ENCODE measurements at regions of chr12 and their contacts with region 1.

Region 1: GRCh38 chr12:47742253-47742825 is 16.3 kb downstream of the RAPGEF3 start:
- DNase-seq: peak; percentile 85
- H3K4me3 Mint-ChIP-seq: no peak overlapping the region
- H3K27ac Mint-ChIP-seq: no peak overlapping the region
- H3K4me1 Mint-ChIP-seq: peaks cover 29% of the 10 kb centered on the region
- H3K27me3 Mint-ChIP-seq: no peaks in the 10 kb centered on the region

Region 2: DNA sequence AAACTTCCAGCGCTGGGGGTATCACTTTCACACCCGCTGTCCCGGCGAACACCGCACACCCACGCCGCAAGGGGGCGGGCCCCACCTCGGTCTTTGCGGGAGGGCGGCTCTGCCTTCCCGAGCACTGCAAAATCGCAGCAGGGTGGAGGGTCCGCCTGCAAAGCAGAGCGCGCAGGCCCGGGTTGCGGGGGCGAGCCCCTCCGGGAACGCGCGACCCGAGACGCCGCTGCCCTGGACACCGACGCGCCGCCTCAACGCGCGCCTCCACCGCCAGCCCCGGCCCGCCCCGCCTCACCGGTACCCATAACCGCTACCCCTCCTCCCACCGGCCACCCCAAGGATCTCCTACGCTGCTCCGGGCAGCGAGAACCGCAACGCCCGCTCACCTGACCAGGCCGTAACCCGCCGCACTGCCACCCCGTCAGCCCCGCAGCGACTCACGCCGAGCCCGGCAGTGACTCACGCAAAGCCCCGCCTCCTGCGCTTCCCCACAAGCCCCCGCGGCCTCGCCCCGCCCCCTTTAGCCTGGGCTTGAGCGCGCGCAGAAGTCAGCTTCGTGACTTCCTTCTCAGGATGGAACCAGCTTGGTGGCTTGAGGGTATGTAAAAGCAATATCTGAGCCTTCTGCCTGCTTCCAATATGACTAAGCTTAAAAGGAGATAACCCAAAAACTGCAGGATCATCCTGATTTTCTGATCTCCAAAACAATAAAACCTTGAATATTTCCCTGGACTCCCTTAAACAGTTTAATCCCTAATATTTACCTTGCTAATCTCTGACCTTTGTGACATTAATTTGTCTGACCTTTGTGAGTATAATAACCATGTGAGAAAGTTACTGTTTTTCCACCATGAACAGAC is 36.5 kb before region 1 on chr12 and contains the start of gene RPAP3:
- CTCF ChIA-PET with region 1: interaction called, 19 read pairs
- POLR2A ChIA-PET with region 1: no interaction called
- intact Hi-C with region 1: no loop called
- DNase-seq: peak; percentile 99
- H3K4me3 Mint-ChIP-seq: peak within 1 kb of the TSS; percentile 96
- H3K27ac Mint-ChIP-seq: peak within 1 kb of the TSS; percentile 95
- H3K4me1 Mint-ChIP-seq: peaks cover 50% of the 10 kb centered on the region
- H3K27me3 Mint-ChIP-seq: no peaks in the 10 kb centered on the region
- total RNA-seq, gene RPAP3: 49.4 to 50.2 TPM

Region 3: DNA sequence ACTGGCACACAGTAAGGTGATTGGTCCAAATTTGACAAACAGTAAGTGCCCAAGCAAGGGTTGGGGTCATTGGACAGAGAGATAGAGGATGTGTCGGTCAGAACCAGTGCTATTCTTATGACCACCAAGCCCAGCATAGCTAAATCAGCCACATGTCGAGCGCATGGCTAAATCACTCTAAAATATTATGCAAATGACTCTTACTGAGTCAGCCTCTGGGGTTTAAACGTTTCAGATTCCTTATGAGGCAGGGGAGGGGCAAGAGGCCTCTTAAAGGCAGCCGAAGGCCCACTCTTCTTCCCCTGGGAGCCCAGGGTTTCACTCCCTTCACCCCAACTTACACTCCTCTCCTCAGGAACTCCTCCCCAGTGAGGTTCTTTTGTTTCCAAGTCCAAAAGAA is 16.4 kb before region 1 on chr12:
- CTCF ChIA-PET with region 1: interaction called, 74 read pairs
- POLR2A ChIA-PET with region 1: no interaction called
- intact Hi-C with region 1: no loop called
- DNase-seq: no peak
- H3K4me3 Mint-ChIP-seq: no peak overlapping the region
- H3K27ac Mint-ChIP-seq: no peak overlapping the region
- H3K4me1 Mint-ChIP-seq: peaks cover 7% of the 10 kb centered on the region
- H3K27me3 Mint-ChIP-seq: no peaks in the 10 kb centered on the region

Region 4: DNA sequence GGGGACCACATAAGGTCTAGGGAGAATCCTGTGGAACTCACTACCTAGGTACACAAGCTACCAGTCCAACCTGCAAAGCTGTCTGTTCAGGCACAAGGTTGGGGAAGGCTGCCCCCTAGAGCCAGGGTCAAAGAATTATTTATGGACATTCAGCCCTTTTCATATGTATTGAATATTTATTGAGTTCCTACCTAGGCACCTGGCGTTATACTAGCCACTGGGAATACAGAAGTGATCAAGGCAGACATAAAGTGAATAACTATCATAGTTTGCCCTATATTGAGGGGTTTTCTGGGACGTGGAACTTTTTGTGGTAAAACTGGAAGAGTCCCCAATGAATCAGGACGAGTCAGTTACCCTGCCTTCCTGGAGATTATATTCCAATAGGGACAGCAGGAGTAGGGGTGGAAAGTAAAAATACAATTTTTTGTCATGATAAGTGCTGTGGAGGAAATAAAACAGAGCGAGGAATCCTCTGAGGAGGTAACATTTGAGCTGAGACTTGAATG is 24.9 kb after region 1 on chr12:
- CTCF ChIA-PET with region 1: interaction called, 837 read pairs
- POLR2A ChIA-PET with region 1: interaction called, 19 read pairs
- intact Hi-C with region 1: loop called (anchors 1 kb)
- DNase-seq: peak; percentile 86
- H3K4me3 Mint-ChIP-seq: no peak overlapping the region
- H3K27ac Mint-ChIP-seq: no peak overlapping the region
- H3K4me1 Mint-ChIP-seq: no peaks in the 10 kb centered on the region
- H3K27me3 Mint-ChIP-seq: no peaks in the 10 kb centered on the region

Region 5: GRCh38 chr12:47785036-47785886 is 42.9 kb after region 1 on chr12:
- CTCF ChIA-PET with region 1: interaction called, 837 read pairs
- POLR2A ChIA-PET with region 1: interaction called, 9 read pairs
- intact Hi-C with region 1: no loop called
- DNase-seq: no peak
- H3K4me3 Mint-ChIP-seq: no peak overlapping the region
- H3K27ac Mint-ChIP-seq: peak overlapping the region; percentile 80
- H3K4me1 Mint-ChIP-seq: peaks cover 32% of the 10 kb centered on the region
- H3K27me3 Mint-ChIP-seq: no peaks in the 10 kb centered on the region

Region 6: GRCh38 chr12:47844274-47845019 is 102.1 kb after region 1 on chr12:
- CTCF ChIA-PET with region 1: interaction called, 379 read pairs
- POLR2A ChIA-PET with region 1: interaction called, 16 read pairs
- intact Hi-C with region 1: no loop called
- DNase-seq: no peak
- H3K4me3 Mint-ChIP-seq: no peak overlapping the region
- H3K27ac Mint-ChIP-seq: no peak overlapping the region
- H3K4me1 Mint-ChIP-seq: peaks cover 7% of the 10 kb centered on the region
- H3K27me3 Mint-ChIP-seq: no peaks in the 10 kb centered on the region

Region 7: DNA sequence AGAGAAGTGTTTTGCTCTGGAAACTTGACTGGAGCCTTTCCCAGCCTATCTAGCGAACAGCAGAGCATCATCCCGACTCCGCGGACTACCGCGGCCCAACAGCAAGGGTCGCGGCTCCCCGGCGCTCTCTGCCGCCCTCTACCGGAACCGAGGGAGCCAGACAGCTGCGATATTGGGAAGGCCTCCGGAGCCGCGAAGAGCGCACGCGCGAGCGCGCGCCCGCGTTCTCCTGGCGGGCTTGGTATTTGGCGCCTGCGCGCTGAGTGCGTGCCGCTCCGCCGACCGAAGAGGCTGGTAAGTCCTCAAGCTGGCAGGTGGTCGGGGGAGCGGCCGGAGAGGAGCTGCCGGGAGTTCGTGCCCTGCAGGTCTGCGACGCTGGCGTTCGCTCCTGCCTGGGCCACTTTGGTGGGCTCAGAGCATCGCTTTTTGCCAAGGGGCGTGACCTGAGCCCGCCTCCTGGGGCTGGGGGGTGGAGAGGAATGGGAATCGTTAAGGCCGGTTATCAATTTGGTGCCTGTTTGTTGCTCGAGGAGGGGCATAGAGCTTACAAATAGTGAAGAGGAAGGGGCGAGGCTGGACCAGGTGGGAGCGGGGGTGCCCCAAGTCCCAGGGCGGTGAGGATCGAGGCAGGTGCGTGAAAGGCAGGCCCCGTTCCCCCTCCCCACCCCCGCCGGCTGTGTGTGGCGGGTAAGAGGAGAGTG is 221.2 kb after region 1 on chr12 and contains the start of gene TMEM106C:
- CTCF ChIA-PET with region 1: interaction called, 11 read pairs
- POLR2A ChIA-PET with region 1: no interaction called
- intact Hi-C with region 1: no loop called
- DNase-seq: peak; percentile 94
- H3K4me3 Mint-ChIP-seq: peak within 1 kb of the TSS; percentile 98
- H3K27ac Mint-ChIP-seq: peak within 1 kb of the TSS; percentile 81
- H3K4me1 Mint-ChIP-seq: peaks cover 34% of the 10 kb centered on the region
- H3K27me3 Mint-ChIP-seq: peaks cover 5% of the 10 kb centered on the region
- total RNA-seq, gene TMEM106C: 179 to 182 TPM

Measured in activated CD4-positive, alpha-beta memory T cell treated with anti-CD3 and anti-CD28 coated beads for 36 hours (primary cell).